ENCODE measurements at regions of chr17 and their contacts with region 1.

Region 1: GRCh38 chr17:14203388-14203787 is 33.3 kb downstream of the CDRT15 start:
- DNase-seq: peak in 5 of 9 experiments; percentile 41 to 70 (median 56)
- ATAC-seq: peak; percentile 40
- H3K4me3 ChIP-seq: no peak overlapping the region
- H3K4me3 Mint-ChIP-seq: no peak overlapping the region
- H3K27ac ChIP-seq: peak overlapping the region; percentile 34 to 66
- H3K27ac Mint-ChIP-seq: peak overlapping the region; percentile 81
- H3K4me1 ChIP-seq: peaks cover 85% of the 10 kb centered on the region
- H3K4me1 Mint-ChIP-seq: peaks cover 83% of the 10 kb centered on the region
- H3K27me3 ChIP-seq: no peaks in the 10 kb centered on the region
- H3K27me3 Mint-ChIP-seq: no peaks in the 10 kb centered on the region
- CTCF ChIP-seq: peak; percentile 63

Region 2: DNA sequence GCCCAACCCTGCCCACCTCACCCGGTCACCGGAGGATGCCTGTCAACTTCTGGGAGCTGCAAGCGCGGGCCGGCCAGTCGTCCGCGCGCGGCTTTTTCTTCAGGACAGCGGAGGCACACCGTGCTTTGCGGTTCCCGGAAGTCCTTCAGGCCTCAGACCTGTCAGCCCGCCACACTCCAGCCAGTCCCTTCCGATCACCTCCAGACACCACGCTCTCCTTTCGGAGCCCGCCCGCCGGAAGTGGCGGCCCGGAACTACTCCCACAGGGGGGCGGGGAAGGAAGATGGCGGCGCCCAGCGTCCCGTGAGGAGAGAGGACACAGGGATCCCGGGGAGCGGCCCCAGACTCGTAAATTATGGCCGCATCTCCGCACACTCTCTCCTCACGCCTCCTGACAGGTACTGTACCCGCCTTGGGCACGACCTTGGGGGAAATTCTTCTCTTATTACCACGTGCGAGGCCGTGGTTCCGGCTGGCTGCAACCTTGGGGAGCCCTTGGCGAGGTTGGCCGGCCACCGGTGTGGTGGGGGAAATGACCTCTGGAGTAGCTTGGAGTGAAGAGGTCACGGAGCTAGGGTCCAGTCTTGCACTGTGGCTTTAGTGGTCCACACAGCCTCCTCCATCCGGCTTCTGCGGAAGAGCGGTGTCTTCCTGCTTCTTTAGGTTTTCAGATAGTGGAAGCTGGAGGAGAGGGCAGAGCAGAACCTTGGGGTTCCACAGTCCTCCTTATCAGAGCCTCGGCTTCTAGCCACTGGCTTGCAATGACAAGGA is 134.0 kb before region 1 on chr17 and contains the start of gene COX10:
- CTCF ChIA-PET with region 1: interaction called, 8 read pairs
- POLR2A ChIA-PET with region 1: interaction called, 5 read pairs
- intact Hi-C with region 1: loop called (anchors 1 to 2 kb)
- DNase-seq: peak; percentile 56 to 90 (median 83)
- ATAC-seq: peak; percentile 97
- H3K4me3 ChIP-seq: peak within 1 kb of the TSS; percentile 95 to 100
- H3K4me3 Mint-ChIP-seq: peak within 1 kb of the TSS; percentile 95
- H3K27ac ChIP-seq: peak within 1 kb of the TSS; percentile 76 to 86
- H3K27ac Mint-ChIP-seq: peak within 1 kb of the TSS; percentile 96
- H3K4me1 ChIP-seq: peaks cover 26% of the 10 kb centered on the region
- H3K4me1 Mint-ChIP-seq: peaks cover 47% of the 10 kb centered on the region
- H3K27me3 ChIP-seq: no peaks in the 10 kb centered on the region
- H3K27me3 Mint-ChIP-seq: no peaks in the 10 kb centered on the region
- CTCF ChIP-seq: no peak
- total RNA-seq, gene COX10: 13.4 to 14.4 TPM

Region 3: DNA sequence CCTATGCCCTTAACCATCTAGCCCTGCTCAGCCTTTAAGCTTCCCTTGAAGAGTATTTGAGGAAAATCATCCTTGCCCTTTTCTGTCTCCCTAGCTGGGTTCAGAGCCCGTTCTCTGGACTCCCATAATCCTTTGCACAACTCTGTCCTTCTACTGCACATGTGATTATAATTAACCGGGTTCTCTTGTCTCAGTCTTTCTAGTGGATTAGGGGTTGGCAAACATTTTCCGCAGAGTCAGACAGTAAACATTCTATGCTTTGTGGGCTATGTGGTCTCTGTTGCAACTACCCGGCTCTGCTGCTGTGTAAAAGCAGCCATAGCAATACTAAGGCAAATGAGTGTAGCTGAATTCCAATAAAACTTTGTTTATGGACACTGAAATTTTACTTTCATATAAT is 46.7 kb before region 1 on chr17:
- CTCF ChIA-PET with region 1: no interaction called
- POLR2A ChIA-PET with region 1: no interaction called
- intact Hi-C with region 1: loop called in 1 of 2 experiments (anchors 10 kb)
- DNase-seq: peak in 1 of 9 experiments; percentile 12
- ATAC-seq: no peak
- H3K4me3 ChIP-seq: no peak overlapping the region
- H3K4me3 Mint-ChIP-seq: no peak overlapping the region
- H3K27ac ChIP-seq: no peak overlapping the region
- H3K27ac Mint-ChIP-seq: no peak overlapping the region
- H3K4me1 ChIP-seq: peaks cover 4% of the 10 kb centered on the region
- H3K4me1 Mint-ChIP-seq: peaks cover 30% of the 10 kb centered on the region
- H3K27me3 ChIP-seq: no peaks in the 10 kb centered on the region
- H3K27me3 Mint-ChIP-seq: no peaks in the 10 kb centered on the region
- CTCF ChIP-seq: no peak